ENCODE measurements at regions of chr16 and their contacts with region 1.

Region 1: GRCh38 chr16:15765880-15766279 is 90.9 kb downstream of the MYH11 start:
- DNase-seq: no peak
- H3K4me3 ChIP-seq: no peak overlapping the region
- H3K27me3 ChIP-seq: peaks cover 1% of the 10 kb centered on the region
- CTCF ChIP-seq: peak; percentile 77

Region 2: GRCh38 chr16:15754827-15755534 is 10.9 kb before region 1 on chr16:
- CTCF ChIA-PET with region 1: interaction called, 13 read pairs
- POLR2A ChIA-PET with region 1: interaction called, 5 read pairs
- DNase-seq: no peak
- H3K4me3 ChIP-seq: no peak overlapping the region
- H3K27me3 ChIP-seq: no peaks in the 10 kb centered on the region; the same call in 1 of the 2 replicates
- CTCF ChIP-seq: no peak

Region 3: GRCh38 chr16:15777533-15778203 is 11.8 kb after region 1 on chr16:
- CTCF ChIA-PET with region 1: interaction called, 12 read pairs
- POLR2A ChIA-PET with region 1: no interaction called
- DNase-seq: no peak
- H3K4me3 ChIP-seq: no peak overlapping the region
- H3K27me3 ChIP-seq: peaks cover 2% of the 10 kb centered on the region
- CTCF ChIP-seq: peak; percentile 59

Region 4: GRCh38 chr16:15782573-15783365 is 16.9 kb after region 1 on chr16:
- CTCF ChIA-PET with region 1: interaction called, 12 read pairs
- POLR2A ChIA-PET with region 1: no interaction called
- DNase-seq: no peak
- H3K4me3 ChIP-seq: no peak overlapping the region
- H3K27me3 ChIP-seq: no peaks in the 10 kb centered on the region; the same call in 1 of the 2 replicates
- CTCF ChIP-seq: no peak